ENCODE measurements at regions of chr11 and their contacts with region 1.

Region 1: DNA sequence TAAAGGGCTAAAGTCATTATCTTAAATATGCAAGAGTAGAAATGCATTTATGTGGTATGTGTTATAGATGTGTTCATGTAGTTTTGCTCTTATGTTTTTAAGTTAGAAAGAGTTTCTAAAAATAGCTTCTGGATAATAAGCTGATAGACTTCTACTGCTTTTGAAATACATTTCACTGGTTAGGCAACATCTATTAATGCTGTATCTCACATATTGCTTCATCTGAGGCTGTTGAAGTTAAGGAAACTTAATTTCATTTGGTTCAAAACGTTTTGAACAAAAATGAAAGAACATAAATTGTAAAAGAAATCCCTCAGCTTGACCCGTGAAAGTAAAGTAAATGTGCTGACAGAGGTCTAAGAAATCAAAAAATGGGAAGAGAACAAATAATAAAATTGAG is 164.0 kb upstream of the CTSC start:
- DNase-seq: no peak
- H3K4me3 ChIP-seq: no peak overlapping the region
- H3K27ac ChIP-seq: no peak overlapping the region
- H3K4me1 ChIP-seq: no peaks in the 10 kb centered on the region
- H3K27me3 ChIP-seq: no peaks in the 10 kb centered on the region
- CTCF ChIP-seq: no peak
- POLR2A ChIP-seq: no peak

Region 2: DNA sequence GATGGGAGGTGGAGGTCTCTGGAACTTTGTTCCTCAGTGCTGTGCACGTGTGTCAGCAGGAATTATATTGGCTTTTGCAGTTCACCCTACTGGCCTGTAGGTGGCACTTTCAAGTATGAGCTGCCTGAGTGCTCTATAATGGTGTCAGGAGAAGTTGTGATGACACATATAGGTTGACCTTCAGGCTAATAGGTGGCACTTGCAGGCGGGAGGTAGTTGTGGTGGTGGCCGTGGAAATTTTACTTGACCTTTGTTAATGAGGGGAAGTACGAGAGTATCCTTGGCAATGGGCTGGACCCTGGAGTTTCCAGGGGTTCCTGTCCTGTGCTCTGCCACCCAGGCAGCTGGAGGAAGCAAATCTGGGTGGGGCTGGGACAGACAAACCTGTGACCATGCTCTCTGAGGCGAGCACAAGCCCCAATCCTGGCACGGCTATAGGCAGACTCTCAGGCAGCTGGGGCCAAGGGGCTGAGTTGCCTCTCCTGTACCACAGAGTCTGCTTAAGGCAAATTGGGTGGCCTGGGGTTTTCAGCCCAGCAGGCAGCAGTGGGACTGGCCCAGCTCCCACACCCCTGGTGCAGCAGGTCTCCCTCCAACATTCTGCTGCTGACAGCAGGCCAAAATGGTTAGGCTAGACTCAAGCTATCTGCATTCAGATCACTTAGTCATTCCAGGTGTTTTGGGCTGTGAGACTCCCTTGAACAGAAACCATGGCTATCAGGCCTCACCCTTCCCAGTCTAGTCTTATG is 16.5 kb before region 1 on chr11:
- CTCF ChIA-PET with region 1: interaction called, 26 read pairs
- POLR2A ChIA-PET with region 1: no interaction called
- dilution Hi-C with region 1: no loop called
- intact Hi-C with region 1: no loop called
- DNase-seq: peak; percentile 37
- H3K4me3 ChIP-seq: no peak overlapping the region
- H3K27ac ChIP-seq: no peak overlapping the region
- H3K4me1 ChIP-seq: no peaks in the 10 kb centered on the region
- H3K27me3 ChIP-seq: no peaks in the 10 kb centered on the region
- CTCF ChIP-seq: peak; percentile 64 to 73
- POLR2A ChIP-seq: no peak

Region 3: GRCh38 chr11:88644724-88645123 is 143.2 kb after region 1 on chr11:
- CTCF ChIA-PET with region 1: no interaction called
- POLR2A ChIA-PET with region 1: no interaction called
- dilution Hi-C with region 1: no loop called
- intact Hi-C with region 1: no loop called
- DNase-seq: no peak
- H3K4me3 ChIP-seq: no peak overlapping the region
- H3K27ac ChIP-seq: no peak overlapping the region
- H3K4me1 ChIP-seq: no peaks in the 10 kb centered on the region
- H3K27me3 ChIP-seq: no peaks in the 10 kb centered on the region
- CTCF ChIP-seq: no peak
- POLR2A ChIP-seq: no peak